Activated naive CD4-positive, alpha-beta T cell treated with anti-CD3 and anti-CD28 coated beads, Interleukin-2, amount 10 ng/mL, durations not matched to agents 7 days and 5 days (primary cell): ENCODE measurements at regions of chr11 and their contacts with region 1.

Region 1: GRCh38 chr11:6603287-6604080 is at the starts of genes ILK and RRP8:
- DNase-seq: peak; percentile 92
- H3K4me3 Mint-ChIP-seq: no peak within 1 kb of the TSS
- H3K27ac Mint-ChIP-seq: no peak within 1 kb of the TSS
- H3K4me1 Mint-ChIP-seq: no peaks in the 10 kb centered on the region
- H3K27me3 Mint-ChIP-seq: no peaks in the 10 kb centered on the region

Region 2: GRCh38 chr11:6619004-6619745 is 15.7 kb after region 1 on chr11 and contains the start of gene TPP1:
- CTCF ChIA-PET with region 1: interaction called, 30 read pairs
- DNase-seq: peak; percentile 94
- H3K4me3 Mint-ChIP-seq: no peak within 1 kb of the TSS
- H3K27ac Mint-ChIP-seq: no peak within 1 kb of the TSS
- H3K4me1 Mint-ChIP-seq: no peaks in the 10 kb centered on the region
- H3K27me3 Mint-ChIP-seq: no peaks in the 10 kb centered on the region

Region 3: DNA sequence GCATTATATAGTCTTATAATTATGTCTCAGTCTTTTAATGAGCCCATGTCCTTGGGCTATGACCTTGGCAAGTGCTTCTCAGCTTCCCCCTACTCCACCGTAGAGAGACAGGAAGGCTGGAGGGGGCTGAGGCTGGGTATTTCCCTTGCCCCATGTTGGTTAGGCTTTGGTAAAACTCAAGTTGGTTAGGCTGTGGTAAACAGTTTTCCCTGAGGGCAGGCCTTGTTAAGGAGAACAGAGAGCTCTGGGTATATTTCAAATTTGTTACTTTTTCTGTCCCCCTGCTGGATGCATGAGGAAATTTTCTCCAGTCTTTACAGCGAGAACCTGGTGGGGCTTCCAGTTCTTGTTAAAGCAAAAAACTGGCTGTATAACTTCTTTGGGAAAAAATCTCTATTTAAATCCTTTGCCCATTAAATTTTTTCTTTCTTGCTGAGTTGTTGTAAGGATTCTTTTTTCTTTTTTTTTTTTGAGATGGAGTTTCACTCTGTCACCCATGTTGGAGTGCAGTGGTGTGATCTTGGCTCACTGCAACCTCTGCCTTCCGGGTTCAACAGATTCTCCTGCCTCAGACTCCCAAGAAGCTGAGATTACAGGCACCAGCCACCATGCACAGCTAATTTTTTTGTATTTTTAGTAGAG is 64.4 kb after region 1 on chr11:
- CTCF ChIA-PET with region 1: interaction called, 22 read pairs
- DNase-seq: peak; percentile 35
- H3K4me3 Mint-ChIP-seq: no peak overlapping the region
- H3K27ac Mint-ChIP-seq: peak overlapping the region; percentile 40
- H3K4me1 Mint-ChIP-seq: peaks cover 61% of the 10 kb centered on the region
- H3K27me3 Mint-ChIP-seq: peaks cover 16% of the 10 kb centered on the region

Region 4: GRCh38 chr11:6682936-6683861 is 79.7 kb after region 1 on chr11 and contains the start of gene MRPL17:
- CTCF ChIA-PET with region 1: interaction called, 66 read pairs
- DNase-seq: peak; percentile 100
- H3K4me3 Mint-ChIP-seq: peak within 1 kb of the TSS; percentile 98
- H3K27ac Mint-ChIP-seq: peak within 1 kb of the TSS; percentile 96
- H3K4me1 Mint-ChIP-seq: peaks cover 29% of the 10 kb centered on the region
- H3K27me3 Mint-ChIP-seq: no peaks in the 10 kb centered on the region

Region 5: DNA sequence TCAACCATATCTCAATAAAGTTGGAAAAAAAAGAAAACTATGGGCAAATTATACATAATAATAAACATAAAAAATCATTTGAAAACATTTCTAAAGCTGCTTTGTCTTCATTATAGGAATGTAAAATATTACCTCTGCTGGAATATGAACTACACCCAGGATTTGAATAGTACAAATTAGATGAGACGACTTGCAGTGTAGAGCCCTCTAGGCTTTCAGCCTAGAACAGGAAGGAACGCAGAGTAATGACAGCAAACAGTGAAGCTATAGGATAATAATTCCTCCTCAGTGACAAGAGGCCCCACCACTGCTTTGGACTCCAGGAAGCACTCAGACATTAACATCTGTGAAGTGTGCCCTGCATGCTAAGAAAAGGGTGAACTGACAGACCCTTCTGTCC is 187.1 kb after region 1 on chr11:
- CTCF ChIA-PET with region 1: no interaction called
- DNase-seq: no peak
- H3K4me3 Mint-ChIP-seq: no peak overlapping the region
- H3K27ac Mint-ChIP-seq: no peak overlapping the region
- H3K4me1 Mint-ChIP-seq: no peaks in the 10 kb centered on the region
- H3K27me3 Mint-ChIP-seq: peaks cover 8% of the 10 kb centered on the region